Heart right ventricle (tissue), 16 donors: ENCODE measurements at regions of chr15 and their contacts with region 1.

Region 1: DNA sequence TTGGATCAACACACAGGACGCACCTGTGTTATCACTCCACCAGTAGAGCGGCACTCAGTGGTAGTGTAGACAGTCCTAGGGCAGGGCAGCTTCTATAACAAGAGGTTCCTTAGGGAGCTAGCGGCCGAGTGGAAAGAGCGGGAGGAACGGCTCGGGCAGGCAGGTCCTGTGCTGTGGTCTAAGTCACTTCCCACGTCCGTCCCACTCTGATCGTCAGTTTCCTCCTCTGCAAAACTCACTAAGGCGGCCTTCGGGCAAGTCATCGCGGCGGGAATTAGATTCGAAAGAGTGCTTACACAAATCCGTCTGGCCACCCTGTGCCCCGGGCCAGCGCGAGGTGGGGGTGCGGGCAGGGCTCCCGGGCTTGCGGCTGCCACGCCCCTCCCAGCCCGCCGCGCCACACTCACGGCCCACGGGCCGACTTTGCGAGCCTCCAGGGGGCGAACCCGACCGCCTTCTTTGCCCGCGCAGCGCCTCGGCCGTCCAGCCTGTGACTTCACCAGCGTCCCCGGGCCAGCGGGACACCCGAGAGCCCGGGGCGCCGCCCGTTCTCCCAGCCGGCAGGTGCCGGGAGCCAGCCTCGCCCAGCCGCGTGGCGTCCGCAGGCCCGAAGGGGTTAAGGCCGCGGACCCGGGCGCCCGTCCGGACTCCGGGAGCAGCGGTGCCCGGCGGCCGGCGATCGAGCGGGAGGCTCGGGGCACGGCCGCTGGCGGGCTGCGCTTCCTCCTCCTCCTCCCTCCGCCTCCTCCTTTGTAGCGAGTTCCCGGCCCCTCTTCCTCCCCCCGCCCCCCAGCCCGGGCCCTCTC is 416 bp upstream of the CORO2B start:
- DNase-seq: peak; percentile 74 to 85
- ATAC-seq: peak; percentile 74 to 87 (median 83)
- H3K4me3 ChIP-seq: peak overlapping the region; percentile 16 to 89 (median 70)
- H3K27ac ChIP-seq: peak overlapping the region; percentile 76 to 92 (median 86)
- H3K4me1 ChIP-seq: peaks cover 6 to 51% (median 23%) of the 10 kb centered on the region in 9 donors
- H3K27me3 ChIP-seq: peaks cover 0 to 49% (median 0%) of the 10 kb centered on the region in 7 donors
- CTCF ChIP-seq: peak; percentile 50 to 87 (median 67)

Region 2: DNA sequence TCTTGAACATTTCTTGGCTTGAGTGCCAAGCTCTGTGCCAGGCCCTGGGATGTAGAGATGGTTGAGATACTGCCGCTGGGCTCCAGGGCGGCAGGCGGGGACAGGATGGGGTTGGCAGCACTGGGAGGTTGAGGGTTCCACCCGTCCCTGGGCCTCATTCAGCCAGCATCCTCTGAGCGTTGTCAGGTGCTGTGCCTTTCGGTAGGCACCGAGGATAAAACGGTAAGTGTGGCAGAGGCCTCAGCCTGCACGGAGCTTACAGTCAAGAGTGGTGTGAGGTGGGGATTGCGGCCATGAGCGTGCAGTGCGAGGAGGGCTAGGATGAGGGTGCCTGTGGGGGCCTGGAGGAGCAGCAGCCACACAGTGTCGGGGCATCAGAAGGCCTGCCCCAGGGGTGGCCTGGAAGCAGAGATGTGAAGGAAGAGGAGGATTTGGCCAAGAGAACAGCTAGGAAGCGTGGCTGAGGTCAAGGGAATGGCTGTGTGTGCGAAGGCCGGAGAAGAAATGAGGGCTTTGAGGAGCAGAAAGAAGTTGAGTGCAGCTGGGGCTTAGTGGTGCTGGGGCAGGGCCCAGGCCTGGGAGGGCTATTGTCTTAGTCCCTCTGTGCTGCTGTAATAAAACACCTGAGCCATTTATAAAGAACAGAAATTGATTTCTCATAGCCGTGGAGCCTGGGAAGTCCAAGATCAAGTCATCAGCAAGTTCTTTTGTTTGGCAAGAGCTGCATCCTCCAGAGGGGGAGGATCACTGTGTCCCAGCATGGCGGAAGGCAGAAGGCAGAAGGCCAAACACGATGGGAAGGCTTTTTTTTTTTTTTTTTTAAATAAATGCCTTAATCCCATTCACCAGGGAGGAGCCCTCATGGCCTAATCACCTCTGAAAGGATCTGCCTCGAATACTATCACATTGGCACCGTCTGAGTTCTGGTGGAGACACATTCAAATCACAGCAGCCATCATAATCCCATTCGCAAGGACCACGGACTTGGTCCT is 23.1 kb after region 1 on chr15:
- intact Hi-C with region 1: loop called in 1 of 10 experiments (anchors 1 kb)
- DNase-seq: peak in 1 of 2 donors; percentile 64
- ATAC-seq: peak; percentile 48 to 82 (median 70)
- H3K4me3 ChIP-seq: no peak overlapping the region
- H3K27ac ChIP-seq: peak overlapping the region; percentile 8 to 86 (median 66)
- H3K4me1 ChIP-seq: peaks cover 9 to 90% (median 69%) of the 10 kb centered on the region in 9 donors
- H3K27me3 ChIP-seq: no peaks in the 10 kb centered on the region
- CTCF ChIP-seq: no peak

Region 3: GRCh38 chr15:68620721-68621527 is 42.5 kb after region 1 on chr15:
- intact Hi-C with region 1: loop called in 2 of 10 experiments (anchors 5 kb)
- DNase-seq: peak; percentile 82 to 86
- ATAC-seq: peak; percentile 77 to 88 (median 84)
- H3K4me3 ChIP-seq: no peak overlapping the region
- H3K27ac ChIP-seq: peak overlapping the region in 9 of 10 donors; percentile 43 to 78 (median 65)
- H3K4me1 ChIP-seq: peaks cover 0 to 65% (median 29%) of the 10 kb centered on the region in 9 donors
- H3K27me3 ChIP-seq: no peaks in the 10 kb centered on the region
- CTCF ChIP-seq: no peak

Region 4: GRCh38 chr15:68637767-68638404 is 59.5 kb after region 1 on chr15:
- intact Hi-C with region 1: loop called in 2 of 10 experiments (anchors 2 to 5 kb)
- DNase-seq: peak; percentile 56 to 80
- ATAC-seq: peak; percentile 58 to 85 (median 76)
- H3K4me3 ChIP-seq: no peak overlapping the region
- H3K27ac ChIP-seq: peak overlapping the region in 7 of 10 donors; percentile 5 to 66 (median 56)
- H3K4me1 ChIP-seq: peaks cover 19 to 88% (median 67%) of the 10 kb centered on the region in 9 donors
- H3K27me3 ChIP-seq: no peaks in the 10 kb centered on the region
- CTCF ChIP-seq: no peak

Region 5: GRCh38 chr15:68644077-68644904 is 65.9 kb after region 1 on chr15:
- intact Hi-C with region 1: loop called in 1 of 10 experiments (anchors 5 kb)
- DNase-seq: no peak
- ATAC-seq: no peak
- H3K4me3 ChIP-seq: no peak overlapping the region
- H3K27ac ChIP-seq: peak overlapping the region in 1 of 10 donors; percentile 14
- H3K4me1 ChIP-seq: peaks cover 5 to 27% (median 20%) of the 10 kb centered on the region in 9 donors
- H3K27me3 ChIP-seq: no peaks in the 10 kb centered on the region
- CTCF ChIP-seq: peak in 5 of 9 donors; percentile 9 to 33 (median 29)

Region 6: DNA sequence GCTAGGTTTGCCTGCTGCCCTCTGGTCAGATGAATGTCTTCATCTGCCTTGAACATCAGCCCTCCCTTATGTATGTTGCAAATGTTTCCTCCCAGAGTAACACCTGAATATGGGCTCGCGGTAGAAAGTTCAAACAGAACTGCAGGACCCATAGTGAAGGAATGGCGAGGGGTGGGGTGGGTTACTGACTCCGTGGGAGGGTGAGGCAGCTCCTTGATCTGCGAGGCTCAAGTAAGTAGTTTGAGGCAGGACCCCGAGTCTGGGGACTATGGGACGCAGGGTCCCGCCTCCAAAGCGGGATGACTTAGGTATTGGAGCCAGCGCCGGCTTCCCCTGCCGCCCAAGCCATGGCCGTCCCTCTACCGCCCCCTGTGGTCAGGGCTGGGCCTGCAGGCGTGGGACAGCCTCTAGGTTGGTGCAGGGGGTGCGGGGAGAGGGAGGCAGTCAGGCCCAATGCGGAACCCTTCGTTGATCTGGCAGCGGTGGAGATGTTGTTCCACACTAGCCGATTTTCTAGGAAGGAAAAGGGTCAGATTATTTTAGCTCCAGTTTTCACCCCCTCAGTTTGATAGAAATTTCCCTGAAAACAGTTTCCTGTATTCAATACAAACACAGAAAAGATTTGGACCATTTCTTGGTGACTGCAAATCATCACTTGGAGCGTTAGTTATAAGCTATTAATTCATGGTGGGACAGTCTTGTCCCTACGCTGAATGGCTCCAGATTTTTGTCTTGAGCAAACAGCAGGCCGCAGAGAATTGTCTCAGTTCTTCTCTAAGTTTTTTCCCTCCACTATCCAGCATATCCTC is 72.7 kb after region 1 on chr15:
- intact Hi-C with region 1: loop called in 1 of 10 experiments (anchors 5 kb)
- DNase-seq: peak; percentile 59 to 73
- ATAC-seq: peak; percentile 48 to 76 (median 66)
- H3K4me3 ChIP-seq: no peak overlapping the region
- H3K27ac ChIP-seq: peak overlapping the region in 1 of 10 donors; percentile 45
- H3K4me1 ChIP-seq: peaks cover 0 to 12% (median 3%) of the 10 kb centered on the region in 9 donors
- H3K27me3 ChIP-seq: no peaks in the 10 kb centered on the region
- CTCF ChIP-seq: peak; percentile 44 to 84 (median 70)

Region 7: GRCh38 chr15:68672781-68673205 is 94.4 kb after region 1 on chr15:
- intact Hi-C with region 1: loop called in 8 of 10 experiments (anchors 2 to 5 kb)
- DNase-seq: no peak
- ATAC-seq: peak in 1 of 8 donors; percentile 29
- H3K4me3 ChIP-seq: no peak overlapping the region
- H3K27ac ChIP-seq: no peak overlapping the region
- H3K4me1 ChIP-seq: peaks cover 4 to 28% (median 23%) of the 10 kb centered on the region in 9 donors
- H3K27me3 ChIP-seq: no peaks in the 10 kb centered on the region
- CTCF ChIP-seq: peak in 5 of 9 donors; percentile 11 to 32 (median 24)